Caco-2 (cell line): ENCODE measurements at regions of chr14 and their contacts with region 1.

Region 1: GRCh38 chr14:91893007-91893406 is 25.7 kb upstream of the TC2N start:
- DNase-seq: peak in 1 of 2 experiments; percentile 50
- H3K4me3 ChIP-seq: no peak overlapping the region
- H3K4me3 Mint-ChIP-seq: no peak overlapping the region
- H3K27ac Mint-ChIP-seq: no peak overlapping the region
- H3K4me1 ChIP-seq: no peaks in the 10 kb centered on the region
- H3K4me1 Mint-ChIP-seq: no peaks in the 10 kb centered on the region
- H3K27me3 ChIP-seq: no peaks in the 10 kb centered on the region
- H3K27me3 Mint-ChIP-seq: no peaks in the 10 kb centered on the region
- CTCF ChIP-seq: peak; percentile 51 to 57

Region 2: GRCh38 chr14:91714805-91715204 is 178.2 kb before region 1 on chr14:
- CTCF ChIA-PET with region 1: no interaction called
- POLR2A ChIA-PET with region 1: no interaction called
- intact Hi-C with region 1: loop called (anchors 5 kb)
- DNase-seq: peak in 1 of 2 experiments; percentile 27
- H3K4me3 ChIP-seq: no peak overlapping the region
- H3K4me3 Mint-ChIP-seq: no peak overlapping the region
- H3K27ac Mint-ChIP-seq: no peak overlapping the region
- H3K4me1 ChIP-seq: no peaks in the 10 kb centered on the region
- H3K4me1 Mint-ChIP-seq: no peaks in the 10 kb centered on the region
- H3K27me3 ChIP-seq: no peaks in the 10 kb centered on the region
- H3K27me3 Mint-ChIP-seq: peaks cover 2% of the 10 kb centered on the region
- CTCF ChIP-seq: peak; percentile 28 to 59

Region 3: DNA sequence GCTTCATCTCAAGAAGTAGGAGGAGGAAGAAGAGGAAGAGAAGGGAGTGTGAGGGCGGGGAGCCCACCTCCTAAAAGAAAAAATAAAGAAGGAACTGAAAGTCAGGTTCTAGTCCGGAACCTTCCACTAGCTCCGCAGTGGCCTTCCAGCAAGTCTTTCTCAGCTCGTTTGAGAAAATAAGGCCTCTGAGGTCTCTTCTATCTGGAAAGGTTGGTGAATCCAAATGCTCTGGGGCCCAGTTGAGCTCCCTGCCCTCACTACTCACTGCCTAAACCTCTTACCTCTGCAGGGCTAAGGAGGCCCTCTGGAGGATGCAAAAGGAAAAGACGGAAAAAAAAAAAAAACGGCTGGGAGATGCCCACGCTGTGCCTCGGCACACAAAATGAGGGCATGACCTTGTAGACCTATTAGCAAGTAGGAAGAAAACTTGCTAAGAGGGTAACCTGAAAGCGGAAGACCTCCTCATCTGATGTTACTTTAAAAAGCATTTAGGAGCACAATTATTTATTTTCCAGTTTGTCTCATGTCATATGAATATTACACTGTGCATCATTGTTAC is 18.5 kb after region 1 on chr14:
- CTCF ChIA-PET with region 1: no interaction called
- POLR2A ChIA-PET with region 1: no interaction called
- intact Hi-C with region 1: no loop called
- DNase-seq: peak; percentile 43 to 45
- H3K4me3 ChIP-seq: no peak overlapping the region
- H3K4me3 Mint-ChIP-seq: no peak overlapping the region
- H3K27ac Mint-ChIP-seq: no peak overlapping the region
- H3K4me1 ChIP-seq: no peaks in the 10 kb centered on the region
- H3K4me1 Mint-ChIP-seq: no peaks in the 10 kb centered on the region
- H3K27me3 ChIP-seq: no peaks in the 10 kb centered on the region
- H3K27me3 Mint-ChIP-seq: no peaks in the 10 kb centered on the region
- CTCF ChIP-seq: peak in 1 of 2 experiments; percentile 52